Mammary epithelial cell (primary cell): ENCODE measurements at regions of chr14 and their contacts with region 1.

Region 1: DNA sequence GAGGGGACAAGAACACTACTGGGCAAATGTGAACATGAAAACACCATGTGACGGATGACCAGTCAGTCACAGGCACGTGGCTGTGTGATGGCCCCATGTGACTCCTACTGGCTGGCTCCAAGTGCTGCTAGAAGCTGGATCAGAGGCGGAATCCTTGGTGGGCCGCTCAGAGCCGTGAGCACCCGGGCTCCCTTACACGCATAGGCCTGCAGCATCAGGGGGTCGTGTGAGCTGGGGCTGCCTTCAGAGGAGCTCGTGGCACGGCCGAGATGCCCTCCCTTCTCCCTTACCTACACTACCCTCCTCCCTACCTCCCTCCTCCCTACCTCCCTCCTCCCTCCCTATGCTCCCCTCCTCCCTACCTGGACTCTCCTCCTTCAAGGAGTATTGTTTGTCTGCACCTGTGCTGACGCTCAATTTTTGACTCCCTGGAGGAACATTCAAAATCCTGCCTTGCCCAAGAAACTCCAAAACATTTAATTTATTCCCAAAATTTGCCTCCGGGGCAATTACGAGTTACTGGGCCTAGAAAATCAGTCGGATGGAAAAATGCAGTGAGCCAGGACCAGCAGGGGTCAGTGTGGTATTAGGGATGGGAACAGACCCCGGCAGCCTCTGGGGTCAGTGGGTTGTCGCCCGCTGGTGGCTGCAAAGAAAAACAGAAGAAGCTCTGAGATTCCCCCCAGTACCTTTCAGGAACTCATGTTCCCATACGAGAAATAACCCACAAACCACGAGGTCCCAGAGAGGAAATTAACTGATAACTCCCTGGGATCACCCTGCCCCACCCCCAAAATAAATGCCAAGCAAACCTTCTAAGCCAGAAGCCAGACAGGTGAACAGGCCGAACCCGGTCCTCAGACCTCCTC is 61.2 kb downstream of the C14orf132 start:
- DNase-seq: peak; percentile 57
- H3K4me3 ChIP-seq: no peak overlapping the region
- H3K27ac ChIP-seq: no peak overlapping the region
- H3K4me1 ChIP-seq: peaks cover 16% of the 10 kb centered on the region
- H3K27me3 ChIP-seq: no peaks in the 10 kb centered on the region
- CTCF ChIP-seq: peak; percentile 75 to 94

Region 2: DNA sequence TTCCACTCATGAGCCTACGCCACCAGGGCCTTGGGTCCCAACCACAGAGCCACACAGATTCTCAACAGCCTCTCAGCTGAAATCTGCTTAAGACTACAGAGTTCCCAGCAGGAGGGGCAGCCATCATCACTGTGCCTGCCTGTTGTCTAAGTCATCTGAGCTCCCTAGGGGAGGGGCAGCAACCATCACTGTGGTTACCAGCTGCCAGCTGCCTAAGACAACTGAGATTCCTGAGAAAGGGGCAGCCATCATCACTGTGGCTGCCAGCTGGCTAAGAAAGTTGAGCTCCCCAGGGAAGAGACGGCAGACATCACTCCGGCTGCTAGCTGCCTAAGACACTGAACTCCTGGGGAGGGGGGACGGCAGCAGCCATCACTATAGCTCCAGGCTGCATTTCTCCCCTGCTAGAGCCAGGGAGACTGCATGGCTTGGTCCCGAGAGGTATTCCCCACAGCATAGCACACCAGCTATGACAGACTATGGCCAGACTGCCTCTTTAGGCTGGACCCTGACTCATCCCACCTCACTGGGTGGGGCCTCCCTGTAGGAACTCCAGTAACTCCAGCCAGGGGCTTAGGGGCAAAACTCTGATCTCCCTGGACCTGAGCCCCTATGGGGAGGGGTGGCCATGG is 98.4 kb before region 1 on chr14:
- CTCF ChIA-PET with region 1: interaction called, 8 read pairs
- dilution Hi-C with region 1: no loop called
- in situ Hi-C with region 1: loop called (anchors 5 kb)
- intact Hi-C with region 1: loop called (anchors 1 kb)
- DNase-seq: no peak
- H3K4me3 ChIP-seq: no peak overlapping the region
- H3K27ac ChIP-seq: no peak overlapping the region
- H3K4me1 ChIP-seq: no peaks in the 10 kb centered on the region
- H3K27me3 ChIP-seq: peaks cover 5% of the 10 kb centered on the region
- CTCF ChIP-seq: no peak

Region 3: GRCh38 chr14:96204151-96205058 is 104.0 kb after region 1 on chr14 and contains the start of gene BDKRB2:
- CTCF ChIA-PET with region 1: interaction called, 6 read pairs
- dilution Hi-C with region 1: no loop called
- in situ Hi-C with region 1: no loop called
- intact Hi-C with region 1: loop called (anchors 1 kb)
- DNase-seq: peak; percentile 85
- H3K4me3 ChIP-seq: peak within 1 kb of the TSS; percentile 44 to 68 (median 65)
- H3K27ac ChIP-seq: peak within 1 kb of the TSS; percentile 75
- H3K4me1 ChIP-seq: peaks cover 42% of the 10 kb centered on the region
- H3K27me3 ChIP-seq: no peaks in the 10 kb centered on the region
- CTCF ChIP-seq: no peak
- total RNA-seq, gene BDKRB2: 7.5 to 21.1 TPM

Region 4: GRCh38 chr14:96268431-96269358 is 168.3 kb after region 1 on chr14:
- CTCF ChIA-PET with region 1: interaction called, 3 read pairs
- dilution Hi-C with region 1: loop called (anchors 25 kb)
- in situ Hi-C with region 1: loop called (anchors 5 kb)
- intact Hi-C with region 1: loop called (anchors 1 kb)
- DNase-seq: peak; percentile 99
- H3K4me3 ChIP-seq: no peak overlapping the region
- H3K27ac ChIP-seq: peak overlapping the region; percentile 78
- H3K4me1 ChIP-seq: peaks cover 46% of the 10 kb centered on the region
- H3K27me3 ChIP-seq: no peaks in the 10 kb centered on the region
- CTCF ChIP-seq: no peak

Region 5: DNA sequence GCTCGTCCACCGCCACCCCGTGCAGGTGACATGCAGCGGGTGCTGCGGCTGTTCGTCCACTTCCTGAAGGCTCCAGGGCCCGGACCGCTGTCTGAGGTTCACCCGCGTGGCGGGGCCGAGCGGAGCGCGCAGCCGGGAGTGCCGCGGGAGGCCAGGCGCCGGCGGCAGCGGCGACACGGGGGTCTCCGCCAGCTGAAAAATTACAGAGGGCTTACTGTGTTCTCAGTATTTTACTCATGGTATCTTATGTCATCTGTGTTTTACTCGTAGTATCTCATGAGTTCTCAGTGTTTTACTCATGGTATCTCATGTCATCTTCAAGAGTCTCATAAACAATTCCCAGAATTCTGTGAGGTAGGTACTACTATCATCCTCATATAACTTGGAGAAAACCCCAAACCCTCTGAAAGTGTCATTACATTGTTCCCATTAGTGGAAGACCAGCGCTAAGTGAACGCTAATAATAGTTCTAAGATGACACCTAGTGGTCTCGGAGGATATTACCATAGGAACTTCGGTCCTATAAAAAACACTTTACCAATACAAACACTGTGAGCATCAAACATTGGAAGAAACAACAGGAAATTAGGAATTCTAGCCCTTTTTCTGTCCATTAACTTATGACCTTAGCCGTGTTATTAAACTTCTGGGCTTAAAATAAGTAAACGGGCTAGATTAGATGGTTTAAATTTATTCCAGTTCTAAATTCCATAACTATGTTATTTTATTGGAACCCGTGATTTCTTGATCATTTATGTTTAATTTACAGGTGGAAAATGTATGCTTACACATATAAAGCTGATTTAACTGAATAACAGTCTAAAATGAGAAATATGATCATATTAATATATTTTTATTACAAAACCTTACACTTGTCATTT is 324.0 kb after region 1 on chr14:
- CTCF ChIA-PET with region 1: no interaction called
- dilution Hi-C with region 1: no loop called
- in situ Hi-C with region 1: loop called (anchors 25 kb)
- intact Hi-C with region 1: loop called (anchors 1 kb)
- DNase-seq: peak; percentile 65
- H3K4me3 ChIP-seq: peak overlapping the region; percentile 36 to 45 (median 42)
- H3K27ac ChIP-seq: no peak overlapping the region
- H3K4me1 ChIP-seq: peaks cover 5% of the 10 kb centered on the region
- H3K27me3 ChIP-seq: no peaks in the 10 kb centered on the region
- CTCF ChIP-seq: peak; percentile 67 to 79